ENCODE measurements at regions of chr7 and their contacts with region 1.

Region 1: GRCh38 chr7:51366930-51367613 is 50.5 kb upstream of the COBL start:
- DNase-seq: peak; percentile 79
- H3K4me3 ChIP-seq: no peak overlapping the region
- H3K4me3 Mint-ChIP-seq: no peak overlapping the region
- H3K27ac Mint-ChIP-seq: peak overlapping the region; percentile 52
- H3K4me1 ChIP-seq: peaks cover 14% of the 10 kb centered on the region
- H3K4me1 Mint-ChIP-seq: peaks cover 22% of the 10 kb centered on the region
- H3K27me3 ChIP-seq: no peaks in the 10 kb centered on the region
- H3K27me3 Mint-ChIP-seq: no peaks in the 10 kb centered on the region
- CTCF ChIP-seq: peak; percentile 89 to 90

Region 2: DNA sequence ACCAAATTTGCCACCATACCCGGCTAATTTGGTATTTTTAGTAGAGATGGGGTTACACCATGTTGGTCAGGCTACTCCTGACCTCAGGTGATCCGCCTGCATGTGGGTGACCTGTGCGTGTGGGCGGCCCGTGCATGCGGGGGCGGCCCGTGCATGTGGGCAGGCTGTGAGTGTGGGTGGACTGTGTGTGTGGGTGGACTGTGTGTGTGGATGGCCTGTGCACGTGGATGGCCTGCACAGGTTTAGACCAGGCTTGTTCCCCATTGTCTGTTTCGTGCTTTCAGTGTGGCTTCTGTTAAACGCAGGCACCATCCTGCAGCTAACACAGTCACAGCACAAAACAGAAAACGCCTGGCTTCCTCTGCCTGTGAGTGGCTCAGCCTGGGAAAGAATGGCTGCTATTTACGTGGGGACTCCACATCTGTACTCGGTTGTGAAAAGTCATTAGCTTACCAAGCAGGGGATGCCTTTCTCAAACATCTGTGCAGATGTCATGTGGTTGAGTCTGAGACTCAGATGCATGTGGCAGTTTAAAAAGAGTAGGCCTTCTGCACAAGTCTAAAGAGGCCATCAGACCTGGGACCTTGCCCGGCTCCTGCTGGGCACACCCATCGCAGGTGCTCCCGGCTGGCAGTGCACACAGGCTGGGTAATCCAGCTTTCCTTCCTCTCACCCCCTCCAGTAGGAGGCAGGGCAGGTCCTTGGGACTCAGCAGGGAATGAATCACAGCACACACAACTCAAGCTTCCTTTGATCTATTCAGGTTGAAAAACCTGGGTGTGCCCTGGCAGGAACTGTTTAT is 142.1 kb before region 1 on chr7:
- CTCF ChIA-PET with region 1: interaction called, 37 read pairs
- POLR2A ChIA-PET with region 1: no interaction called
- intact Hi-C with region 1: loop called (anchors 1 kb)
- DNase-seq: peak in 1 of 2 experiments; percentile 60
- H3K4me3 ChIP-seq: no peak overlapping the region
- H3K4me3 Mint-ChIP-seq: no peak overlapping the region
- H3K27ac Mint-ChIP-seq: no peak overlapping the region
- H3K4me1 ChIP-seq: peaks cover 16% of the 10 kb centered on the region
- H3K4me1 Mint-ChIP-seq: peaks cover 23% of the 10 kb centered on the region
- H3K27me3 ChIP-seq: no peaks in the 10 kb centered on the region
- H3K27me3 Mint-ChIP-seq: no peaks in the 10 kb centered on the region
- CTCF ChIP-seq: peak in 1 of 2 experiments; percentile 63

Region 3: DNA sequence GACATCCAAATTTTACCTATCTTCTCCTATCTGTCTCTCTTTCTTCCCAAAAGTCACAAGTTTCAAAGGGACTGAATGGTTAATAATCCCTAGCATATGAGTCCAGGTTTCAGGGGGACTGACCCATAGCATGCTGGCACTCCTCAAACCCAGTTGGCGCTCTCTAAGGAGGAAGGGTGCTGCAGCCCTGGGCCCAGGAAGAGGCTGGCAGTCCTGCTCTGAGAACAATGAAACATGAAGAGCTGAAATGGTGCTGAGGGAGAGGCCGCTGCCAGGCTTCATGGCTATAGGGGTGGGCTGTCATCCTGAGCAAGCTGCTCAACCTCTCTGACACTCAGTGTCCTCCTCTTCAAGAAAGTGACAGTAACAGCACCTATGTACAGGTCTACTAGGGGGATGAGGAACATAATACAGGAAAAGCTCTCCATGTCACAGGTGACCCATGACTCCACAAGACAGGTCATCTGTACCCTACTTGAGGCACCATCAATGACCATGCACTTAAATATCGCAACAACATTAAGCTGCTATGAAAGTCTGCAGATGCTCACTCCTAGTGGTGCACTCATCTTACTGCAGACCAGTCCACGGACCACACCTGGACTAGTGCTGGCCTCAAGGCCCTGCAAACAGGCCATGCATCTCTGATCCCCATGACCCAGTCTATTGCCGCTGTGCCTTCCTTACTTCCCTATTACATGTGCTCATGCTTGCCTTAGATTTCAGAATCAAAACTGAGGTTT is 67.5 kb before region 1 on chr7:
- CTCF ChIA-PET with region 1: interaction called, 4 read pairs
- POLR2A ChIA-PET with region 1: no interaction called
- intact Hi-C with region 1: loop called (anchors 5 kb)
- DNase-seq: no peak
- H3K4me3 ChIP-seq: no peak overlapping the region
- H3K4me3 Mint-ChIP-seq: no peak overlapping the region
- H3K27ac Mint-ChIP-seq: no peak overlapping the region
- H3K4me1 ChIP-seq: peaks cover 20% of the 10 kb centered on the region
- H3K4me1 Mint-ChIP-seq: peaks cover 13% of the 10 kb centered on the region
- H3K27me3 ChIP-seq: no peaks in the 10 kb centered on the region
- H3K27me3 Mint-ChIP-seq: no peaks in the 10 kb centered on the region
- CTCF ChIP-seq: peak in 1 of 2 experiments; percentile 21

Region 4: DNA sequence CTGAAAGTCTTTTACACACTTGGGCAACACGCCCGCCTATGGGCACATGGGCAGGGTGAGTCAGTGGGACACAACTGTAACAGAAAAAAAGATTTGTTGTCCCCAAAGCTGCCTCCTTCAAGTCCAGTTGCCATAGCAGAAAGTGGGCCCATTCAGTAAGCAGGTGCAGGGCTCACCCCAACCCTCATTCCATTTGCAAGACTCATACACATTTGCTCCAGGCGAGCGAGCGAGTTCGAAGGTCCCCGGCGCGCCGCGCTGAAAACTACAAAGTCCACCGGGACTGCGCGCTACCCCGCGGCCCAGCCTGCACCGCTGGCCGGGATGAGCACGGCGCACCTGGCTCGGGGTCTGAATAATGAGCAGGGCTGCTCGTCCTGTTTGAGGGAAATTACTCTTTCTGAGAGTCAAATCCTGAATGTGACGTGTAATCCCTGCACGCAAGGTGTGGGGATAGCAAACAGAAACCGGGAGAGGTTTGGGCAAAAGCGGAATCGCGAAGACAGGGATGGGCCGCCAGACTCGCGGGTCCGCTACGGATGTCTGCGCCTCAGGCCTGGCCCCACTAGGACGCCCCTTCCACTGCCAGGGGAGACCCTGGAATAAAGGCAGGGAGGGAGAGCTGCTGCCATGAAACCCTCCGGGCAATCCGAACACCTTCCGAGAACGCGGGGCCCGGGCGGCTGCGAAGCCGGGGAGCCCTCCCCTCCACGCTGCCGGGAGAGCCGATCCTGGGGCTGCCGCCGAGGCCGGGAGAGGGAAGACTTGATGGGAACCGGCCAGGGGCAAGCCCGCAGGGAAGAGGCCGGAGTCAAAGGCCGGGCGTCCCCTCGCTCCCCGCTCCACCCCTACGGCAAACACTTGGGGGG is 51.4 kb before region 1 on chr7:
- CTCF ChIA-PET with region 1: interaction called, 5 read pairs
- POLR2A ChIA-PET with region 1: no interaction called
- intact Hi-C with region 1: loop called (anchors 1 kb)
- DNase-seq: peak; percentile 89 to 91
- H3K4me3 ChIP-seq: peak overlapping the region; percentile 93
- H3K4me3 Mint-ChIP-seq: peak overlapping the region; percentile 93
- H3K27ac Mint-ChIP-seq: peak overlapping the region; percentile 96
- H3K4me1 ChIP-seq: peaks cover 64% of the 10 kb centered on the region
- H3K4me1 Mint-ChIP-seq: peaks cover 47% of the 10 kb centered on the region
- H3K27me3 ChIP-seq: no peaks in the 10 kb centered on the region
- H3K27me3 Mint-ChIP-seq: no peaks in the 10 kb centered on the region
- CTCF ChIP-seq: no peak

Region 5: GRCh38 chr7:51430480-51431086 is 63.5 kb after region 1 on chr7:
- CTCF ChIA-PET with region 1: no interaction called
- POLR2A ChIA-PET with region 1: no interaction called
- intact Hi-C with region 1: loop called (anchors 1 kb)
- DNase-seq: peak; percentile 58 to 79
- H3K4me3 ChIP-seq: no peak overlapping the region
- H3K4me3 Mint-ChIP-seq: no peak overlapping the region
- H3K27ac Mint-ChIP-seq: no peak overlapping the region
- H3K4me1 ChIP-seq: no peaks in the 10 kb centered on the region
- H3K4me1 Mint-ChIP-seq: no peaks in the 10 kb centered on the region
- H3K27me3 ChIP-seq: no peaks in the 10 kb centered on the region; the same call in 1 of the 2 replicates
- H3K27me3 Mint-ChIP-seq: peaks cover 11% of the 10 kb centered on the region
- CTCF ChIP-seq: peak; percentile 82 to 90

Region 6: DNA sequence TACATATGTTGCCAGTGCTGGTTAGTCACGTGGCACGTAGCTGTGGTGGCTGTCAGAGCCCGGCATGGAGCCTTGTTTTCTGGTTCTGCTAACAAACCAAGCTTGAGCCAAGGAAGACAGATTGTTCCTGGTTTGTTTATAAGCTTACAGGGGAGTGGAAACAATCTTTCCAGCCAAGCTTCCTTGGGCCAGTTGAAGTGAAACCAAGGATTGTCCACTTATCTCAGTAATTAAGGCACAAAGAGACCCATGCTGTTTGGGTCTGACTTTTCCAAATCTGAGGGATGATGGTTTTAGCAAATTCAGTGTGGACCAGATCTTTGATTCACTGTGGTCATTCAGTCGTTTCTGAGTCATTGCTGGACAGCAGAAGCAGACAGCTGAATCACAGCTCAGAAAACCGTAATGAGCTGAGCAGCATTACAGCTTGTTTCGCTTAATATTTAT is 246.9 kb after region 1 on chr7:
- CTCF ChIA-PET with region 1: no interaction called
- POLR2A ChIA-PET with region 1: no interaction called
- intact Hi-C with region 1: no loop called
- DNase-seq: no peak
- H3K4me3 ChIP-seq: no peak overlapping the region
- H3K4me3 Mint-ChIP-seq: no peak overlapping the region
- H3K27ac Mint-ChIP-seq: no peak overlapping the region
- H3K4me1 ChIP-seq: peaks cover 12% of the 10 kb centered on the region
- H3K4me1 Mint-ChIP-seq: peaks cover 11% of the 10 kb centered on the region
- H3K27me3 ChIP-seq: no peaks in the 10 kb centered on the region
- H3K27me3 Mint-ChIP-seq: no peaks in the 10 kb centered on the region
- CTCF ChIP-seq: no peak